Psoas muscle (tissue), 8 donors: ENCODE measurements at regions of chr14 and their contacts with region 1.

Region 1: GRCh38 chr14:75009176-75009575 is 6.5 kb downstream of the EIF2B2 start:
- DNase-seq: no peak
- ATAC-seq: no peak
- H3K4me3 ChIP-seq: no peak overlapping the region
- H3K27ac ChIP-seq: no peak overlapping the region
- H3K4me1 ChIP-seq: peaks cover 24% of the 10 kb centered on the region
- H3K27me3 ChIP-seq: no peaks in the 10 kb centered on the region
- CTCF ChIP-seq: no peak

Region 2: DNA sequence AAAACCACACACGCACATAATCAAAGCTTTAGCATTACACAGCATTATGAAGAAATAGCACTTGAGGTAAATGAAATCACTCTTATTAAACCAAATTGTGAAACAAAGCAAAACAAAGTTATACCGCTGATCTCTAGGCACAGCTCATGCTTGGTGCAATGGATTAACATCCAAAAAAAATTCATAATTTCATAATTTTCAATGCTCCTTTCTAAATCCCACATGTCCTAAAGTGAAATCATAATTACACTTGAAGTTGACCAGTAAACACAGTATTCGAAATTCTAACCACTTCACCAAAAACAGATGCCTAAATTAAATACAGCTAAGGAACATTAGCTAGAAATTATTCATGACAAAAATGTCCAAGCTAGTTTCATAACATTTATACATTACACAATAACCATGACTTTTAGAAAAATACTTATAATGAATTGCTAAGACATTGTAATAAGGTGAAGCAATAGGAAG is 40.6 kb after region 1 on chr14:
- intact Hi-C with region 1: loop called in 1 of 2 experiments (anchors 5 kb)
- DNase-seq: no peak
- ATAC-seq: peak in 1 of 4 donors; percentile 29
- H3K4me3 ChIP-seq: no peak overlapping the region
- H3K27ac ChIP-seq: peak overlapping the region; percentile 89
- H3K4me1 ChIP-seq: peaks cover 36% of the 10 kb centered on the region
- H3K27me3 ChIP-seq: no peaks in the 10 kb centered on the region
- CTCF ChIP-seq: no peak